Pancreas (tissue), 10 donors: ENCODE measurements at regions of chr9 and their contacts with region 1.

Region 1: GRCh38 chr9:33452828-33453271 is 5.5 kb upstream of the AQP3 start:
- DNase-seq: peak in 5 of 6 donors; percentile 40 to 75 (median 69)
- ATAC-seq: peak; percentile 51 to 89 (median 80)
- H3K4me3 ChIP-seq: no peak overlapping the region
- H3K27ac ChIP-seq: no peak overlapping the region
- H3K4me1 ChIP-seq: peaks cover 0 to under 1% (median 0%) of the 10 kb centered on the region in 3 donors
- H3K27me3 ChIP-seq: no peaks in the 10 kb centered on the region
- CTCF ChIP-seq: peak; percentile 24 to 51 (median 43)

Region 2: GRCh38 chr9:33404788-33405362 is 48.0 kb before region 1 on chr9:
- intact Hi-C with region 1: loop called in 1 of 3 experiments (anchors 5 kb)
- DNase-seq: no peak
- ATAC-seq: peak in 1 of 4 donors; percentile 43
- H3K4me3 ChIP-seq: no peak overlapping the region
- H3K27ac ChIP-seq: no peak overlapping the region
- H3K4me1 ChIP-seq: no peaks in the 10 kb centered on the region
- H3K27me3 ChIP-seq: no peaks in the 10 kb centered on the region
- CTCF ChIP-seq: no peak